ENCODE measurements at regions of chr11 and their contacts with region 1.

Region 1: GRCh38 chr11:130434521-130435223 is 6.3 kb upstream of the ADAMTS8 start:
- DNase-seq: peak; percentile 79
- H3K4me3 Mint-ChIP-seq: no peak overlapping the region
- H3K27ac Mint-ChIP-seq: no peak overlapping the region
- H3K4me1 Mint-ChIP-seq: peaks cover 9% of the 10 kb centered on the region
- H3K27me3 Mint-ChIP-seq: peaks cover 11% of the 10 kb centered on the region

Region 2: DNA sequence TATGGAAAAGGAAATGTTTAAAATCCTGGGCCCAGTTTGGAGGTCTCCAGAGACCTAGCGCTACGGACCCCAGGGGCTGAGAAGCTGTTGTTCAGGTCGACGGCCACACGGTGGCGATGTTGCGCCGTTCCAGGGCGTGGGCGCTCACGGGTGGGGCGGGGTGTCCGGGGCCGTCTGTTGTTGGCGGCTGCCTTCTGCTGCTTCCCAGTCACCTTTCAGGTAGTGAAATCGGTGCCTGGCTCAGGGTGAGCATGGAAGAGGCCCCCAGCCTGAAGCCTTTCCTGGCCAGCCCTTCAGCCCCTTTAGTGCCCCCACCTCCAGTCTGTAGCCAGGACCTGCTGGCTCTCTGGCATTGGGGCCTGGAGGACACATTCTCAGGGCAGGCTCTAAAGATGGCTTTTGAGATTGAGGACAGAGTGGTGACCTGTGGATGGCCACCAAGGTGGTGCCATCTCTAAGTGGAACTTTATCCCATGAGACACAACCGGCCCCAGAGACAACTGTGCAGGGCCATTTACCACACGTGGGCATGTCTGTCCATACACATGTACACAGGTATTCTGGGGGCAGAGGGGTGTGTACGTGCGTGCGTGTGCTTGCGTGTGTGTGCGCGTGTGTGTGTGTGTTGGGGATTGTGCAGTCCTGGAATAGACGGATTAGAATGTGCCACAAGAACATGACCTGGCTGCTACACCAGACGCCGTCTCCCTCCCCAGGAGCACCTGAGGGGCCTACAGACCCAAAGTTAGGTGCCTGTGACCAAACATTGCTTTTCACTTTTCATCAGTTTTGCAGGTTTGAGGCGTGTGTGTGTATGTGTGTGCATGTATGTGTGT is 221.3 kb before region 1 on chr11:
- CTCF ChIA-PET with region 1: interaction called, 19 read pairs
- intact Hi-C with region 1: loop called (anchors 1 kb)
- DNase-seq: peak; percentile 72
- H3K4me3 Mint-ChIP-seq: no peak overlapping the region
- H3K27ac Mint-ChIP-seq: no peak overlapping the region
- H3K4me1 Mint-ChIP-seq: no peaks in the 10 kb centered on the region
- H3K27me3 Mint-ChIP-seq: no peaks in the 10 kb centered on the region

Region 3: DNA sequence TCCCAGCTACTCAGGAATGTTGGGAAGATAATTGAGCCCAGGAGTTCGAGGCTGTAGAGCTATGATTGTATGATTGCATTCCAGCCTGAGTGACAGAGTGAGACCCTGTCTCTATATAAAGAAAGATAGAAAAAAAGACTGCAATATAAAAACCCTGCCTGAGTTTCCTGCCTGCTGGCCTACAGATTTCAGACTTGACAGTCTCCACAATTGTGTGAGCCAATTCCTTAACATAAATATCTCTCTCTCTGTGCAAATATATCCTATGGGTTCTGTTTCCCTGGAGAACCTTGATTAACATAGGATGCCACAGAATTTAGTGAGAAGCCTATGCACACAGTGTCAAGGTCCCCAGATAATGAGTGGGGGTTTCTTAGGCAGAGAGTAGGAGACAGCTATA is 87.4 kb before region 1 on chr11:
- CTCF ChIA-PET with region 1: no interaction called
- intact Hi-C with region 1: no loop called
- DNase-seq: no peak
- H3K4me3 Mint-ChIP-seq: no peak overlapping the region
- H3K27ac Mint-ChIP-seq: no peak overlapping the region
- H3K4me1 Mint-ChIP-seq: no peaks in the 10 kb centered on the region
- H3K27me3 Mint-ChIP-seq: no peaks in the 10 kb centered on the region

Region 4: GRCh38 chr11:130522284-130522961 is 87.8 kb after region 1 on chr11:
- CTCF ChIA-PET with region 1: interaction called, 3 read pairs
- intact Hi-C with region 1: loop called (anchors 10 kb)
- DNase-seq: no peak
- H3K4me3 Mint-ChIP-seq: no peak overlapping the region
- H3K27ac Mint-ChIP-seq: no peak overlapping the region
- H3K4me1 Mint-ChIP-seq: no peaks in the 10 kb centered on the region
- H3K27me3 Mint-ChIP-seq: peaks cover 3% of the 10 kb centered on the region

Region 5: GRCh38 chr11:130634961-130635473 is 200.3 kb after region 1 on chr11:
- CTCF ChIA-PET with region 1: interaction called, 3 read pairs
- intact Hi-C with region 1: loop called (anchors 5 kb)
- DNase-seq: peak; percentile 20
- H3K4me3 Mint-ChIP-seq: no peak overlapping the region
- H3K27ac Mint-ChIP-seq: no peak overlapping the region
- H3K4me1 Mint-ChIP-seq: peaks cover 7% of the 10 kb centered on the region
- H3K27me3 Mint-ChIP-seq: peaks cover 11% of the 10 kb centered on the region

Region 6: DNA sequence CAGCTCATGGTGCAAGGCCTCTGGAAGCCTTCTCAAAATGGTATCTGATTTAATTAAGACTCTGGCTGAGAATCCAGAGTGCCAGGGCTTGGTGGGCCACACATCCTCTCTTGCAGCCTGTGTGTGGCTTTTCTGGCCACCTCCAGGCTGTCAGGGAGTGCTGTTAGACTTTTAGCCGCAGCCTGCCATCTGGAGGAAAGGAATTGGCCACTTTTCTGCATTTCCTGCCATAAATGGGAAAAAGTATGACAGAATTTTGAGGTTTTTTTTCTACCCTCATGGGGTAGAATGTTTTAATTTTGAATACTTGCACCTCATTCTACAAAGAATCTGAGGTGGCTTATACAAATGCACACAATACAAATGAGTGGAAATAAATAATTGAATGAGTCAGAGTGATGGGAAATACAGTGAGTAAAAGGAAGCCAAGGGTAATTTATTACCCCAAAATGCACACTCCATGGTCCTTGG is 232.1 kb after region 1 on chr11:
- CTCF ChIA-PET with region 1: interaction called, 4 read pairs
- intact Hi-C with region 1: loop called (anchors 1 kb)
- DNase-seq: no peak
- H3K4me3 Mint-ChIP-seq: no peak overlapping the region
- H3K27ac Mint-ChIP-seq: no peak overlapping the region
- H3K4me1 Mint-ChIP-seq: no peaks in the 10 kb centered on the region
- H3K27me3 Mint-ChIP-seq: peaks cover 5% of the 10 kb centered on the region

Region 7: DNA sequence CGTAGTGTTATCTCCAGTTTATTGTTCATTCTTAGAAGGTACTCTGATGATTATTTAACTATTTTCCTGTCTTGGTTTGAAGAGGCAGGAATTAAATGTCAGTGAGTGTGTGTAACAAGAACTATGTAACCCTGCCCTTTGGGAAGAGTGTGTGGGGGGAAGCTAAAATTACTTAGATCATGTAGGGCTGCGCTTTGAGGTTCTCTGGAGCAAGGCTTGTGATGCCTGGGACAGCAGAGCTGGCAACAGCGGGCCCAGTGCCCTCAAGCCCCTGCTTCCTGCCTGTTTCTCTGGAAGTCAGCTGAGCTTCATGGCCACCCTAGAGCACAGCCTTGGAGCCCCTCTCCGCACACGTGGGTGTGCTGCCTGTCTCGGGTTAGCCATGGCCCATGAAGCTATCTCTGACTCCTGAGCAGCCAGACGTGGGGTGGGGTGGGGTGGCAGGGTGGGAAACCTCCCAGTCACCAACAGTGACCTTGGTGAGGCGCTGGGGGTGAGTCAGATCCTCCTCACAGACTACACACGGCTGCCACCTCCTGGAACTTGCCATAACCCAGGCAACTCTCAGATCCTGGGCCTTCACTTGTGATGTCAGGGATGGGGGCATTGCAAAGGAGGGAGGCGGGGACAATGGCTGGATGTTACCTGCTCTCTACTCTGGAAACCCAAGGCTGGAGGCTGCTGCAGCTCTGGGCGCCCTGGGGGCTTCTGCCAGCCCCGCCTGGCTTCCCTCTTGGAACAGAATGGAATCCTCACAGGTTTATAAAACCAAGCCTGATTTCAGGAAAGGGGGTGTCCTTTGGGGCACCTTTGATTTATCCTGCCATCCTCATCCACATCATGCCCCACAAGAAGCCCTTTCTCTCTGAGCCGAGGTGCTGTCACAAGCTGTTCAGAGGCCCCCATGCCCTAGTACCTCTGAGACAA is 393.0 kb after region 1 on chr11:
- CTCF ChIA-PET with region 1: no interaction called
- intact Hi-C with region 1: loop called (anchors 1 kb)
- DNase-seq: peak; percentile 41
- H3K4me3 Mint-ChIP-seq: no peak overlapping the region
- H3K27ac Mint-ChIP-seq: no peak overlapping the region
- H3K4me1 Mint-ChIP-seq: no peaks in the 10 kb centered on the region
- H3K27me3 Mint-ChIP-seq: peaks cover 11% of the 10 kb centered on the region

Region 8: DNA sequence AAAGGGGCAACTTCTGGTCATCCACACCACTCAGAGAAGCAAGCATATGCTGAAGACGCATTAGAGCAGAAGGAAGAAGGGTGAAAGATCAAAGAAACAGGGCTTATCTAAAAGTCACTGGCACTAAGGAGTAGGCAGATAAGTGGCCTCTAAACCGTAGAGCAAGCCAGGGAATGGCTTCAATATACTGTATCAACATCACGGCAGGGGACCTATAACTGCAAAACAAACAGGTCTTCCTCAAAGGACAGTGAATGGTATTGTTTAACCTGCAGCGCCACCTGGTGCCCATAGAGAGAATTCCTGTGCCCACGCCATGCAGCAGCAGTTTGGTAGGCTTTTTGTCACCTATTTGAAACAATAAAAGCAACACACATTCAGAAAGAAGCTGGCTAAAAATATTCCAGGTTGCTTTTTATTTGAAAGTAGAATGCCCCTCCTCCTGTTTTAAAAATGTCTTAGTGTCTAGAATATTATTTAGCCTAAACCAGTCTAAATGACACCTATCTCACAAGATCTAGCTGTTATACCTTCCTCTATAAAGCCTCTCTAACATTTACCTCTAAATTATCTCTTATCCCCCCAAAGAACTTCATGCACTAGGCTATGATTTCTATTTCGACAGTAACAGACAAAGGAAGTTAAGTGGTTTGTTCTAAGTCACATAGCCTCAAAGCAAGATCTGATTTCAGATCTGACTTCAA is 459.8 kb after region 1 on chr11:
- CTCF ChIA-PET with region 1: interaction called, 16 read pairs
- intact Hi-C with region 1: loop called (anchors 1 kb)
- DNase-seq: peak; percentile 80
- H3K4me3 Mint-ChIP-seq: no peak overlapping the region
- H3K27ac Mint-ChIP-seq: no peak overlapping the region
- H3K4me1 Mint-ChIP-seq: no peaks in the 10 kb centered on the region
- H3K27me3 Mint-ChIP-seq: no peaks in the 10 kb centered on the region

Measured in activated naive CD4-positive, alpha-beta T cell treated with anti-CD3 and anti-CD28 coated beads for 36 hours (primary cell).